ENCODE measurements at regions of chr2 and their contacts with region 1.

Region 1: DNA sequence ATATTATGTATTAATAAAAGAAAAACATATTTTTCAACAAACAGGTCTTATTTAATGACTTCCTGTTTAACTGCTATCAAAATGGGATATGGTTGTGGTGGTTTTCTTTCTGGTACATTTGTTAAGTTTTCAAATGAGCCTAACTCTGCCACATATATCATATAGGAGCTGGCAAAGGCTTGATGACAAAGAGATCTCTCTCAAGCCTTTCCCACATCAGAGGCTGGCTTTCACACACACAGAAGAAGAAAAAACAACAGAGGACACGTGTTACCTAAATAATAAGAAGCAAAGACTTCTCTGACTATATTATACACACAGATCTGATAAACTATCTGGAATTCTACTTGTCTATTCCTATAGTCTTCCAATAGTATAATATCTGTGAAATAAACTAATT is 46.1 kb downstream of the CFAP36 start:
- DNase-seq: no peak
- H3K4me3 Mint-ChIP-seq: no peak overlapping the region
- H3K27ac Mint-ChIP-seq: no peak overlapping the region
- H3K4me1 Mint-ChIP-seq: no peaks in the 10 kb centered on the region
- H3K27me3 Mint-ChIP-seq: no peaks in the 10 kb centered on the region

Region 2: GRCh38 chr2:55581435-55581834 is 15.8 kb after region 1 on chr2:
- intact Hi-C with region 1: loop called (anchors 2 kb)
- DNase-seq: no peak
- H3K4me3 Mint-ChIP-seq: no peak overlapping the region
- H3K27ac Mint-ChIP-seq: no peak overlapping the region
- H3K4me1 Mint-ChIP-seq: peaks cover 14% of the 10 kb centered on the region
- H3K27me3 Mint-ChIP-seq: no peaks in the 10 kb centered on the region

Region 3: DNA sequence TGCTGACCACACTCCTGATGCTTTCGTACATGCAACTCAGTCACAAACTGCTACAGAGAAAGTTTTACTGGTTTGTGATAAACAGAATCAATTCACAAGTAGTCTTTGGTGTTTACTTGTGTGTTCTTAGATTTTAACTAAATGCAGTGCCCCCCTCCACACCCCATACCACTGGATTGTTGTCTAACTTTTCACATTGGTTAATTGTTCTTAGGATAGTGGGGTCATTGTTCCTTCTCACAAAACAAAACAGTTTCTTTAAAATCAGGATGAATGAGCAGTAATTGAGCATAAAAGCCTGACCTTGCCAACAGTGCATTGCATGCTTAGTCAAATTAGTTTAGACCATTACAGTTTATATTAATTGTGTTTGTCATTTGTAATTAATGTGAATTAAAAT is 142.1 kb after region 1 on chr2:
- intact Hi-C with region 1: no loop called
- DNase-seq: no peak
- H3K4me3 Mint-ChIP-seq: no peak overlapping the region
- H3K27ac Mint-ChIP-seq: no peak overlapping the region
- H3K4me1 Mint-ChIP-seq: no peaks in the 10 kb centered on the region
- H3K27me3 Mint-ChIP-seq: peaks cover 3% of the 10 kb centered on the region